ENCODE measurements at regions of chr17 and their contacts with region 1.

Region 1: GRCh38 chr17:62686439-62686838 is 59.0 kb downstream of the MRC2 start:
- DNase-seq: no peak
- H3K4me3 ChIP-seq: no peak overlapping the region
- H3K27me3 ChIP-seq: no peaks in the 10 kb centered on the region
- CTCF ChIP-seq: no peak

Region 2: DNA sequence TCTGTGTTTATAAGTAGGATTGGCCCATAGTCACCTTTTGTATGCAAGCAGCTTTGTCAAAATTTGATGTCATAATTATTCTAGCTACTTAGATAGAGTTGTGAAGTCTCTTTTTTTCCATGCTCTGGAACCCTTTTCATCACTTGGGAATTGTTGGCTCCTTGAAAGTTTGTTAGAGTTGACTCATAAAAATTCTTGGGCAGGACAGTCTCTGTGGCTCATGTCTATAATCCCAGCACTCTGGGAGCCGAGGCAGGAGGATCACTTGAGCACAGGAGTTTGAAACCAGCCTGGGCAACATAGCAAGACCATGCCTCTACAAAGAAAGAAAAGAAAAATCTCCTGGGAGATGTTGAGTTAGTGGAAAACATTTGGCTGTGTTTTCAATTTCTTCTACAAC is 104.7 kb before region 1 on chr17:
- CTCF ChIA-PET with region 1: no interaction called
- POLR2A ChIA-PET with region 1: no interaction called
- DNase-seq: no peak
- H3K4me3 ChIP-seq: no peak overlapping the region
- H3K27me3 ChIP-seq: no peaks in the 10 kb centered on the region
- CTCF ChIP-seq: no peak

Region 3: GRCh38 chr17:62671583-62672312 is 14.7 kb before region 1 on chr17:
- CTCF ChIA-PET with region 1: interaction called, 12 read pairs
- POLR2A ChIA-PET with region 1: no interaction called
- DNase-seq: no peak
- H3K4me3 ChIP-seq: no peak overlapping the region
- H3K27me3 ChIP-seq: no peaks in the 10 kb centered on the region
- CTCF ChIP-seq: no peak